ENCODE measurements at regions of chr11 and their contacts with region 1.

Region 1: GRCh38 chr11:118928108-118928870 is 2.6 kb upstream of the BCL9L start:
- DNase-seq: peak; percentile 97
- ATAC-seq: peak; percentile 76
- H3K4me3 ChIP-seq: peak overlapping the region; percentile 68 to 72
- H3K27ac ChIP-seq: peak overlapping the region; percentile 97
- H3K4me1 ChIP-seq: peaks cover 25% of the 10 kb centered on the region
- H3K27me3 ChIP-seq: no peaks in the 10 kb centered on the region
- CTCF ChIP-seq: peak; percentile 99

Region 2: DNA sequence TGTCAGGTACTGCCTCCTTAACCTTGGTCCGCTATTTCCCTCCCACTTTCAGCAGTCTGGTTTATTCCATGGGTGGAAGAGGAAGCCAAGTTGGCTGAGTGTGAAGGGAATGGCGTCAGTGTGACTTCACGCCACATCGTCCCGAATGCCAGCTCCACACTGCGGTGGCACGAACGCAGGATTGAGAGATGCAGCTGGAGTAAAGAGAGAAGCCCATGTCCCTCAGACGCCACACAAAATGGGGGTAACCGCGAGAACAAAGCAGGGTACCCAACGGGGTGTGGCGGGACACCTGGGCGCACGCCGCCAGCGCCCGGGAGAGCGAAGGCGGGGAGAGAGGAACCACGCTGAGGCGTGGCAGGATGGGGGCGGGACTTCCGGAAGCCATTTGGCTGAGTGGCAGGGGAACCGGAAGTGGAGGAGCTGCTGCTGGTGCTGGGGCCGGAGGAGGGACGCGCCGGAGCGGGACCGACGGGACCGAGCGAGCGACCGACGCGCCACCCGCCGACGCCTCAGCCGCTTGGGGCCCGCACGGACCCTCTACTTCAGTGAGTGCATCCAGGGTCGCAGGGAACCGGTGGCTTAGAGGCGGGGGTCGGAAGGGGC is 1784.3 kb before region 1 on chr11 and contains the start of gene PAFAH1B2:
- CTCF ChIA-PET with region 1: interaction called, 10 read pairs
- POLR2A ChIA-PET with region 1: no interaction called
- in situ Hi-C with region 1: no loop called
- intact Hi-C with region 1: no loop called
- DNase-seq: peak; percentile 81
- ATAC-seq: peak; percentile 98
- H3K4me3 ChIP-seq: peak within 1 kb of the TSS; percentile 97 to 100
- H3K27ac ChIP-seq: peak within 1 kb of the TSS; percentile 100
- H3K4me1 ChIP-seq: peaks cover 18% of the 10 kb centered on the region
- H3K27me3 ChIP-seq: no peaks in the 10 kb centered on the region
- CTCF ChIP-seq: no peak
- total RNA-seq, gene PAFAH1B2: 179 TPM

Region 3: GRCh38 chr11:118778898-118779297 is 149.4 kb before region 1 on chr11:
- CTCF ChIA-PET with region 1: interaction called, 11 read pairs
- POLR2A ChIA-PET with region 1: no interaction called
- in situ Hi-C with region 1: no loop called
- intact Hi-C with region 1: no loop called
- DNase-seq: no peak
- ATAC-seq: no peak
- H3K4me3 ChIP-seq: no peak overlapping the region
- H3K27ac ChIP-seq: no peak overlapping the region
- H3K4me1 ChIP-seq: no peaks in the 10 kb centered on the region
- H3K27me3 ChIP-seq: no peaks in the 10 kb centered on the region
- CTCF ChIP-seq: no peak

Region 4: DNA sequence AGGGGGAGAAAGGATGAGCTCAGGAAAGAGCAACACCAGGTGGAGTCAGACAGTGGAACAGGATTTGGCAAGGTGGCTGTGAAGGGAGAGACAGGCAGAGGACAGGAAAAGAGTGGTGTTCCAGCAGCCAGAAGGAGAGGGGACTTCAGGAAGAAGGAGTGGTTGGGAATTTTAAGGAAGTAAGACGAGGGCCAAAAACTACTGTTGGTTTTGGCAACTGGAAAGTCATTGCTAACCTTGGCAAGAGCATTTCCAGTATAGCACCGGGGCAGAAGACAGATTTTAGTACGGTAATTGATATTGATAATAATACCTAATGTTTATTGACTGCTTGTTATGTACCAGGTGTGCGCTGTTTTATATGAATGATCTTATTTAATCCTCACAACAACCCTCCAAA is 121.9 kb before region 1 on chr11:
- CTCF ChIA-PET with region 1: no interaction called
- POLR2A ChIA-PET with region 1: interaction called, 11 read pairs
- in situ Hi-C with region 1: no loop called
- intact Hi-C with region 1: no loop called
- DNase-seq: no peak
- ATAC-seq: no peak
- H3K4me3 ChIP-seq: no peak overlapping the region
- H3K27ac ChIP-seq: no peak overlapping the region
- H3K4me1 ChIP-seq: no peaks in the 10 kb centered on the region
- H3K27me3 ChIP-seq: peaks cover 7% of the 10 kb centered on the region; the same call in 1 of the 2 replicates
- CTCF ChIP-seq: no peak

Region 5: DNA sequence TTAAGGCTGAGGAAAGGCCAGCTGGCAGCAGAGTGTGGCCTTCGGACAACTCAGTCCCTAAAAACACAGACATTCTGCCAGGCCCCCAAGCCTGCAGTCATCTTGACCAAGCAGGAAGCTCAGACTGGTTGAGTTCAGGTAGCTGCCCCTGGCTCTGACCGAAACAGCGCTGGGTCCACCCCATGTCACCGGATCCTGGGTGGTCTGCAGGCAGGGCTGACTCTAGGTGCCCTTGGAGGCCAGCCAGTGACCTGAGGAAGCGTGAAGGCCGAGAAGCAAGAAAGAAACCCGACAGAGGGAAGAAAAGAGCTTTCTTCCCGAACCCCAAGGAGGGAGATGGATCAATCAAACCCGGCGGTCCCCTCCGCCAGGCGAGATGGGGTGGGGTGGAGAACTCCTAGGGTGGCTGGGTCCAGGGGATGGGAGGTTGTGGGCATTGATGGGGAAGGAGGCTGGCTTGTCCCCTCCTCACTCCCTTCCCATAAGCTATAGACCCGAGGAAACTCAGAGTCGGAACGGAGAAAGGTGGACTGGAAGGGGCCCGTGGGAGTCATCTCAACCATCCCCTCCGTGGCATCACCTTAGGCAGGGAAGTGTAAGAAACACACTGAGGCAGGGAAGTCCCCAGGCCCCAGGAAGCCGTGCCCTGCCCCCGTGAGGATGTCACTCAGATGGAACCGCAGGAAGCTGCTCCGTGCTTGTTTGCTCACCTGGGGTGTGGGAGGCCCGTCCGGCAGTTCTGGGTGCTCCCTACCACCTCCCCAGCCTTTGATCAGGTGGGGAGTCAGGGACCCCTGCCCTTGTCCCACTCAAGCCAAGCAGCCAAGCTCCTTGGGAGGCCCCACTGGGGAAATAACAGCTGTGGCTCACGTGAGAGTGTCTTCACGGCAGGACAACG is 32.9 kb before region 1 on chr11:
- CTCF ChIA-PET with region 1: interaction called, 4 read pairs
- POLR2A ChIA-PET with region 1: no interaction called
- in situ Hi-C with region 1: no loop called
- intact Hi-C with region 1: loop called (anchors 5 kb)
- DNase-seq: no peak
- ATAC-seq: peak; percentile 11; the same call in 1 of the 2 replicates
- H3K4me3 ChIP-seq: no peak overlapping the region
- H3K27ac ChIP-seq: peak overlapping the region; percentile 78
- H3K4me1 ChIP-seq: peaks cover 54% of the 10 kb centered on the region
- H3K27me3 ChIP-seq: no peaks in the 10 kb centered on the region
- CTCF ChIP-seq: no peak

Region 6: DNA sequence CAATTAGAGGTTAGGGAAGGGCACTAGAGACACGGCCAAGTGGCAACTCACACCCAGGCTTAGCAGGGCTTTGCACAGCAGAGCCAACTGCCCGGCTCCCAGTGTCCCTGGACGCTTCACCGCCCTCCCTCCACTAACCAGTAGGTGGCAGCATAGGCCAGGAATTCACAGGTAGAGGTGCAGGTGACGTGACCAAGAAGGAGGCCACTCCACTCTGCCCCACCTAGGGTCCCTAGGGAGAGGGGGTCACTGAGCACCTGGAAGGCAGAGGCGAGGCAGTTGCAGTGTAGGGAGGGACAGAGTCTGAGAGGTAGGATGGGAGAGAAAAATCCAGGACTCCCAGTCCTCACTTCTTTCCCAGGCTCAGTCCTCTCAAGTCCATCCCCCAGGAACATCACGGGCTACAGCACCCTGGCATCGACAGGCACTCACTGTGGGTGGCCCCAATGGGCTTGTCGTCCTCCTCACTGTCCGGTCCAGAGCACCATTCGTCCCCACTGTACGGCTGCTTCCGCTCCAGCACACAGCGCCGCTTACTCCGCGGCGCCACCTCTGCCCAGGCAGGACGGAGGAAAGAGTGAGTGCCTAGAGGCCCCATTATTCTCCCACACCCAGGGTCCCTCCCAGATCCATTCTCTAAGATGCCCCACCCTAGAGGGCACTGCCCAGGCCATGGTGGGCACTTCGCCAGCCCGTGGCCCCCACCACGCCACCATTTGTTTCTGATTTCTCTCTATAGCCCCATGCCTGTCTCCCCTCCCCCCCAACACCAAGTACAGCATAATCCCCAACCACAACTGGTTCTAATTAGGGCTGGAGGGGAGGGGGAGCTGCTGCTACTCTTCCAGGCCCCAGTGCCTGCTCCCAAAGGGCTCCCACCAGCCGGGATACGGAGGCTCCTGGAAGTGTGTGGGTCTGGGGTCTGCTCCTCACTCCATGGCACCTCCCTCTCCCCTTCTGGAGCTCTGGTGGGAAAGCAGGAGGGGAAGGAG is 20.9 kb before region 1 on chr11:
- CTCF ChIA-PET with region 1: interaction called, 9 read pairs
- POLR2A ChIA-PET with region 1: interaction called, 22 read pairs
- in situ Hi-C with region 1: no loop called
- intact Hi-C with region 1: loop called (anchors 1 kb)
- DNase-seq: peak; percentile 86
- ATAC-seq: peak; percentile 53
- H3K4me3 ChIP-seq: peak overlapping the region; percentile 11 to 37
- H3K27ac ChIP-seq: peak overlapping the region; percentile 99
- H3K4me1 ChIP-seq: peaks cover 76% of the 10 kb centered on the region
- H3K27me3 ChIP-seq: no peaks in the 10 kb centered on the region
- CTCF ChIP-seq: peak; percentile 92

Region 7: DNA sequence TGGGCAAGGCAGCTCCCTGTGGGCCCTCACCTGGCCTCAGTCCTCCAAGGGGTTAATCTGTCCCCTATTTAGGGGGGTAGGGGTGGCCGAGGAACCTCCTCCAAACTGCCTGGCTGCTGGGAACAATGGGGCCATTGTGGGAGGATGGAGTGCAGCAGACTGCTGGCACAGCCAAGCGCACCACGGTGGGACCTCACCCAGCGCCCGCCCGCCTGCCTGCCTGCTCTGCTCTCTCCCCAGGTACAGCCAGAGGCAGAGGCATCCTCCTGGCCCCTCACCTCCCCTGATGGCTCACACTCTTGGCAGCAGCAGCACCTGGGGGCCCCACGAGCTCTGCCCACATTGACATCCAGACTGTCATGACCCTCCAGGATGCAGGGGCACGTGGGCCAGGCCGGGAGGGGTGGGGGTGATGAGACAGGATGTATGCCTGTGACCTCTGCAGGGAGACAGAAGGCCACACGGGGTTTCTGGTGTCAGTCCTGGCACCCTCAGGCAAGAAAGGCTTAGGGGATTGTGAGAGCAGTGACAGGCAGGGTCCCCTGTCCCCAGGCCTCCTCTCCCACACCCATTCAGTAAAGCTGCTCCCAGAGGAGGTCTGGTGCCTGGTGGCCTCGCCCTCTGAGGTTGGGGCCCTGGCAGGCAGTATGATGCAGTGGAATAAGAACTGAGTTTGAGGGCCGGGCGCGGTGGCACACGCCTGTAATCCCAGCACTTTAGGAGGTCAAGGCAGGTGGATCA is 13.9 kb before region 1 on chr11:
- CTCF ChIA-PET with region 1: interaction called, 9 read pairs
- POLR2A ChIA-PET with region 1: interaction called, 22 read pairs
- in situ Hi-C with region 1: no loop called
- intact Hi-C with region 1: no loop called
- DNase-seq: no peak
- ATAC-seq: peak; percentile 4
- H3K4me3 ChIP-seq: no peak overlapping the region
- H3K27ac ChIP-seq: peak overlapping the region; percentile 99
- H3K4me1 ChIP-seq: peaks cover 93% of the 10 kb centered on the region
- H3K27me3 ChIP-seq: no peaks in the 10 kb centered on the region
- CTCF ChIP-seq: no peak